ENCODE measurements at regions of chr2 and their contacts with region 1.

Region 1: GRCh38 chr2:24421668-24422067 is 61.3 kb upstream of the ITSN2 start:
- DNase-seq: no peak
- H3K4me3 ChIP-seq: no peak overlapping the region
- H3K27ac ChIP-seq: no peak overlapping the region
- H3K27me3 ChIP-seq: peaks cover 5% of the 10 kb centered on the region
- CTCF ChIP-seq: peak; percentile 49

Region 2: GRCh38 chr2:24342110-24342910 is 79.4 kb before region 1 on chr2:
- CTCF ChIA-PET with region 1: no interaction called
- POLR2A ChIA-PET with region 1: no interaction called
- DNase-seq: no peak
- H3K4me3 ChIP-seq: no peak overlapping the region
- H3K27ac ChIP-seq: no peak overlapping the region
- H3K27me3 ChIP-seq: no peaks in the 10 kb centered on the region
- CTCF ChIP-seq: no peak

Region 3: GRCh38 chr2:24480245-24480644 is 58.6 kb after region 1 on chr2:
- CTCF ChIA-PET with region 1: interaction called, 10 read pairs
- POLR2A ChIA-PET with region 1: no interaction called
- DNase-seq: no peak
- H3K4me3 ChIP-seq: no peak overlapping the region
- H3K27ac ChIP-seq: no peak overlapping the region
- H3K27me3 ChIP-seq: peaks cover 12% of the 10 kb centered on the region
- CTCF ChIP-seq: no peak

Region 4: GRCh38 chr2:24568551-24568950 is 146.9 kb after region 1 on chr2:
- CTCF ChIA-PET with region 1: no interaction called
- POLR2A ChIA-PET with region 1: no interaction called
- DNase-seq: no peak
- H3K4me3 ChIP-seq: no peak overlapping the region
- H3K27ac ChIP-seq: no peak overlapping the region
- H3K27me3 ChIP-seq: no peaks in the 10 kb centered on the region
- CTCF ChIP-seq: no peak

Region 5: DNA sequence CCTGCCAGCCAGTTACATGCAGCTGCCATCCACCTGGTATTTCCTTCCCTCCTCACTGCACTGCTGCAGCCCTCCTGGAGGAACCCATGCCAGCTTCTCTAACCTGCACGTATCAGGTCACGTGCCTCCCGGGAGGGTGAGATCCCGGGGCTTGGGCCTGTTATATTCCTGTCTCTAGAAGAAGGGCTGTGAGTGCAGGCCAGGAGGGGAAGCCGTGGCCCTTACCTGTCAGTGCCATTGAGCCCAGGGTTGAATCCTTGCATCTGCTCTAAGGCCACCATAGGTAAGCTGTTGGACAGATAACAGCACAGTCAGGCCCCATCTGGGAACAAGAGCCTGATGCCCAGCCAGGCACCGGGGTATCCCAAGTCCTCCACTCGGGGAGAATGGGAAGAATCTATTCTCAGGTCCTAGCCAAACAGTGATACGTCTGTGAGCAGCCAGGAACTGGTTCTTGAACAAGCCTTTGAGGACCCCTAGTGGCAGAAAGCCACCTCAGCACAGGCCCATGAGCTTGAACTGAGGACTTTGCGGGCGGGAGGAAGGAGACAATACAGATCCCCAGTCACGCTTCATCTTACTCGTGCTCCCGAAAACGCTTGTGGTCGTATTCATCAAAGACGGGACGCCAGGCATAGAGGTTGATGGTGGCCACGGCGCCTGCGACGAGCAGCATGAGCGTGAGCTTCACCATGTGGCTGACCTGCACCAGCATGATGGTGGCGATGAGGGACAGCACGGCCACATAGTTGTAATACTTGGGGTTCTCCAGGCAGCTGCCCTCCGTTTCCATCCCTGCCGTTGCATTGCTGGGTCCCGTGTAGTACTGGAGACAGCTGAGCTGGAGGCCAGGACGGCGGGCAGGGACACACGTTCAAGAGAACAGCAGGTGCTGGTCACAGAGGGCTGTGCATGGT is 405.9 kb after region 1 on chr2:
- CTCF ChIA-PET with region 1: interaction called, 39 read pairs
- POLR2A ChIA-PET with region 1: no interaction called
- DNase-seq: peak; percentile 81
- H3K4me3 ChIP-seq: no peak overlapping the region
- H3K27ac ChIP-seq: no peak overlapping the region
- H3K27me3 ChIP-seq: no peaks in the 10 kb centered on the region
- CTCF ChIP-seq: peak; percentile 95